ENCODE measurements at regions of chr11 and their contacts with region 1.

Region 1: GRCh38 chr11:62427630-62428233 is 8.9 kb downstream of the SCGB1A1 start:
- DNase-seq: no peak
- ATAC-seq: no peak
- H3K4me3 ChIP-seq: no peak overlapping the region
- H3K27ac ChIP-seq: peak overlapping the region; percentile 30
- H3K4me1 ChIP-seq: peaks cover 81% of the 10 kb centered on the region
- H3K27me3 ChIP-seq: no peaks in the 10 kb centered on the region
- CTCF ChIP-seq: no peak
- EP300 ChIP-seq: no peak
- POLR2A ChIP-seq: no peak
- RAD21 ChIP-seq: no peak

Region 2: GRCh38 chr11:62406034-62406433 is 21.7 kb before region 1 on chr11:
- CTCF ChIA-PET with region 1: no interaction called
- POLR2A ChIA-PET with region 1: no interaction called
- in situ Hi-C with region 1: no loop called
- intact Hi-C with region 1: no loop called
- DNase-seq: no peak
- ATAC-seq: no peak
- H3K4me3 ChIP-seq: no peak overlapping the region
- H3K27ac ChIP-seq: no peak overlapping the region
- H3K4me1 ChIP-seq: peaks cover 15% of the 10 kb centered on the region
- H3K27me3 ChIP-seq: peaks cover 5 to 27% of the 10 kb centered on the region in 2 experiments; a peak in 4 of 5 replicates
- CTCF ChIP-seq: no peak
- EP300 ChIP-seq: no peak
- POLR2A ChIP-seq: no peak
- RAD21 ChIP-seq: no peak

Region 3: GRCh38 chr11:62497132-62497915 is 69.6 kb after region 1 on chr11:
- CTCF ChIA-PET with region 1: no interaction called
- POLR2A ChIA-PET with region 1: no interaction called
- in situ Hi-C with region 1: no loop called
- intact Hi-C with region 1: loop called (anchors 2 kb)
- DNase-seq: peak; percentile 86
- ATAC-seq: peak; percentile 81
- H3K4me3 ChIP-seq: no peak overlapping the region
- H3K27ac ChIP-seq: no peak overlapping the region
- H3K4me1 ChIP-seq: peaks cover 71% of the 10 kb centered on the region
- H3K27me3 ChIP-seq: peaks cover 0 to 4% of the 10 kb centered on the region in 2 experiments; a peak in 1 of 5 replicates
- CTCF ChIP-seq: peak; percentile 86
- EP300 ChIP-seq: peak in 1 of 2 experiments; percentile 71; a peak in 2 of 4 replicates
- POLR2A ChIP-seq: no peak
- RAD21 ChIP-seq: peak; percentile 70

Measured in HepG2 (cell line).